CD4-positive, alpha-beta memory T cell (primary cell): ENCODE measurements at regions of chrX and their contacts with region 1.

Region 1: GRCh38 chrX:154013614-154014360 is 5.9 kb downstream of the IRAK1 start:
- DNase-seq: peak in 4 of 5 donors; percentile 51 to 58 (median 54)
- H3K4me3 ChIP-seq: no peak overlapping the region
- H3K4me3 Mint-ChIP-seq: peak overlapping the region in 1 of 8 donors; percentile 20
- H3K27ac ChIP-seq: no peak overlapping the region
- H3K27ac Mint-ChIP-seq: peak overlapping the region in 6 of 7 donors; percentile 25 to 85 (median 74)
- H3K4me1 ChIP-seq: peaks cover 11% of the 10 kb centered on the region
- H3K4me1 Mint-ChIP-seq: peaks cover 2 to 20% (median 6%) of the 10 kb centered on the region in 4 donors
- H3K27me3 ChIP-seq: no peaks in the 10 kb centered on the region
- H3K27me3 Mint-ChIP-seq: no peaks in the 10 kb centered on the region

Region 2: GRCh38 chrX:154002215-154002719 is 11.5 kb before region 1 on chrX:
- CTCF ChIA-PET with region 1: interaction called, 9 read pairs
- POLR2A ChIA-PET with region 1: interaction called, 5 read pairs
- intact Hi-C with region 1: loop called (anchors 1 kb)
- DNase-seq: peak; percentile 26 to 64 (median 39)
- H3K4me3 ChIP-seq: peak overlapping the region in 1 of 2 donors; percentile 40
- H3K4me3 Mint-ChIP-seq: peak overlapping the region; percentile 67 to 88 (median 79)
- H3K27ac ChIP-seq: no peak overlapping the region
- H3K27ac Mint-ChIP-seq: peak overlapping the region; percentile 43 to 92 (median 79)
- H3K4me1 ChIP-seq: peaks cover 15% of the 10 kb centered on the region
- H3K4me1 Mint-ChIP-seq: peaks cover 10 to 18% (median 13%) of the 10 kb centered on the region in 4 donors
- H3K27me3 ChIP-seq: no peaks in the 10 kb centered on the region
- H3K27me3 Mint-ChIP-seq: no peaks in the 10 kb centered on the region

Region 3: GRCh38 chrX:154051201-154051810 is 37.5 kb after region 1 on chrX:
- CTCF ChIA-PET with region 1: interaction called, 13 read pairs
- POLR2A ChIA-PET with region 1: no interaction called
- intact Hi-C with region 1: loop called (anchors 1 kb)
- DNase-seq: peak; percentile 60 to 70 (median 63)
- H3K4me3 ChIP-seq: no peak overlapping the region
- H3K4me3 Mint-ChIP-seq: peak overlapping the region in 2 of 8 donors; percentile 1 to 32
- H3K27ac ChIP-seq: no peak overlapping the region
- H3K27ac Mint-ChIP-seq: peak overlapping the region in 6 of 7 donors; percentile 28 to 89 (median 64)
- H3K4me1 ChIP-seq: peaks cover 23% of the 10 kb centered on the region
- H3K4me1 Mint-ChIP-seq: peaks cover 20 to 57% (median 40%) of the 10 kb centered on the region in 4 donors
- H3K27me3 ChIP-seq: no peaks in the 10 kb centered on the region
- H3K27me3 Mint-ChIP-seq: no peaks in the 10 kb centered on the region

Region 4: DNA sequence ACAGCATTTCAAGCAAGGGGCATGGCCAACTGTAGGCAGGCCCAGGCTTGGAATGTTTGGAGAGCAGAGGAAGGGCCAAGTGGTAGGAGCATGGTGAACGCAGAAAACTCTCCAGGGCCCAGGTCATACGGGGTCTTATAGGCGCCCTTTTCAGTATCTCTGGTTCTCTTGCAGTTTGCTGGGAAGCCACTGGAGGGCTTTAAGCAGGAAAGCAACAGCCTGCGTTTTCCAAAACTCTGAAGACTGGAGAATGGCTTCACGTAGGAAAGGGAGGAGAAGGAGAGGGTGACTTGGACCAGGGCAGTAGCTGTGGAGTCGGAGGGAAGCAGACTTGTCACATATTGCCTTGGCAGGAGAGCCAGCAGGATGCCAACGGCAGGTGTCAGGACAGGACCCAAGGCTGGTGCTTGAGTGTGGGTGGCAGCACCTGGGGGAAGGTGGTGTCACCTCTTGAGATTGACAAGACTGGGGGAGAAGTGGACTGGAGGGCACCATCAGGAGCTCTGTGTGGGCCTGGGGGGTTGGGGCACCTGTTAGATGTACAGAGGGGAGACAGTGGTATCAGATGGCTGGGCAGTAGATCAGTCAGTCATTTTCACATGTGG is 303.7 kb after region 1 on chrX:
- CTCF ChIA-PET with region 1: no interaction called
- POLR2A ChIA-PET with region 1: no interaction called
- intact Hi-C with region 1: no loop called
- DNase-seq: no peak
- H3K4me3 ChIP-seq: no peak overlapping the region
- H3K4me3 Mint-ChIP-seq: peak overlapping the region in 5 of 8 donors; percentile 39 to 66 (median 58)
- H3K27ac ChIP-seq: no peak overlapping the region
- H3K27ac Mint-ChIP-seq: peak overlapping the region in 6 of 7 donors; percentile 15 to 87 (median 61)
- H3K4me1 ChIP-seq: peaks cover 32% of the 10 kb centered on the region
- H3K4me1 Mint-ChIP-seq: peaks cover 21 to 41% (median 31%) of the 10 kb centered on the region in 4 donors
- H3K27me3 ChIP-seq: no peaks in the 10 kb centered on the region
- H3K27me3 Mint-ChIP-seq: no peaks in the 10 kb centered on the region

Region 5: DNA sequence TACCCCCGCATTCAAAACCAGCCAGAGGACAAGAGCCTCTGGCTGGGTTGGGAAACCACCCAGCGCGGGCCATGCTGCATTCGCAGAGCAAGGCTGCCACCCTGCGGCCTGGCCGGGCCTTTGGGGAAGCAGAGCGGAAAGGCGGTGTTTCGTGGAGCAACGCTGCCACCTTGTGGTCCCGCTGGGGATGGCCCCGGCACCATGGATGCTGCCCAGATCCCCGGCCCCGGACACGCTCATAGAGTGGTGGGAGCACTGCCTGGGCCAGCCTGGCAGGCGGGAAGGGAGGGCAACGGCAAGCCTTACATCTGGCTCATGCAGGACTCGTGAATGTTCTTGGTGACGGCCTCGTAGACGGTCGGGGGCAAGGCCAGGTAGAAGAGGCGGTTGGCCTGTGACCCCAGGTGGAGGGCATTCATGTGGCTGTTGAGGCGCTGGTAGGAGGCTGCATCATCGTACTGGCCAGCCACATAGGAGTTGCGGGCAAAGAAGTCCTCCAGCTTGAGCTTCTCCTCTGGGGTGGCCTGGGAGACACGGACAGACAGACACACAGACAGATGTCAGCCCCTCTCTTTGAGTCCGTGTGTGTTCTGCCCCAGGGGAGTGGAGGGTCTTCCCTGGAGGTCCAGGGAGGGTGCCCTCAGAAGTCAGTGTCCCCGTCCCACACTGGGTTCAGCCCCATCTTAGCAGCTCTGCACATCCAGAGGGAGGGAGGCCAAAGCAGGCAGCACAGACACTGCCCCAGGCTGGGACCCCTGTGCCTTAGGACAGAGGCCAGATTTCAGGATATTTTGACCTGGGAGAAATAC is 521.3 kb after region 1 on chrX:
- CTCF ChIA-PET with region 1: interaction called, 4 read pairs
- POLR2A ChIA-PET with region 1: no interaction called
- intact Hi-C with region 1: loop called (anchors 2 kb)
- DNase-seq: peak; percentile 85 to 92 (median 89)
- H3K4me3 ChIP-seq: no peak overlapping the region
- H3K4me3 Mint-ChIP-seq: no peak overlapping the region
- H3K27ac ChIP-seq: peak overlapping the region; percentile 43
- H3K27ac Mint-ChIP-seq: peak overlapping the region in 6 of 7 donors; percentile 22 to 86 (median 72)
- H3K4me1 ChIP-seq: peaks cover 8% of the 10 kb centered on the region
- H3K4me1 Mint-ChIP-seq: peaks cover 2 to 14% (median 5%) of the 10 kb centered on the region in 4 donors
- H3K27me3 ChIP-seq: no peaks in the 10 kb centered on the region
- H3K27me3 Mint-ChIP-seq: no peaks in the 10 kb centered on the region

Region 6: GRCh38 chrX:155056877-155057792 is 1043.3 kb after region 1 on chrX:
- CTCF ChIA-PET with region 1: no interaction called
- POLR2A ChIA-PET with region 1: no interaction called
- intact Hi-C with region 1: no loop called
- DNase-seq: peak; percentile 44 to 52 (median 47)
- H3K4me3 ChIP-seq: peak overlapping the region in 1 of 2 donors; percentile 19
- H3K4me3 Mint-ChIP-seq: peak overlapping the region; percentile 71 to 85 (median 78)
- H3K27ac ChIP-seq: peak overlapping the region; percentile 2
- H3K27ac Mint-ChIP-seq: peak overlapping the region; percentile 65 to 86 (median 81)
- H3K4me1 ChIP-seq: peaks cover 13% of the 10 kb centered on the region
- H3K4me1 Mint-ChIP-seq: peaks cover 7 to 26% (median 15%) of the 10 kb centered on the region in 4 donors
- H3K27me3 ChIP-seq: no peaks in the 10 kb centered on the region
- H3K27me3 Mint-ChIP-seq: no peaks in the 10 kb centered on the region